ENCODE measurements at regions of chr1 and their contacts with region 1.

Region 1: DNA sequence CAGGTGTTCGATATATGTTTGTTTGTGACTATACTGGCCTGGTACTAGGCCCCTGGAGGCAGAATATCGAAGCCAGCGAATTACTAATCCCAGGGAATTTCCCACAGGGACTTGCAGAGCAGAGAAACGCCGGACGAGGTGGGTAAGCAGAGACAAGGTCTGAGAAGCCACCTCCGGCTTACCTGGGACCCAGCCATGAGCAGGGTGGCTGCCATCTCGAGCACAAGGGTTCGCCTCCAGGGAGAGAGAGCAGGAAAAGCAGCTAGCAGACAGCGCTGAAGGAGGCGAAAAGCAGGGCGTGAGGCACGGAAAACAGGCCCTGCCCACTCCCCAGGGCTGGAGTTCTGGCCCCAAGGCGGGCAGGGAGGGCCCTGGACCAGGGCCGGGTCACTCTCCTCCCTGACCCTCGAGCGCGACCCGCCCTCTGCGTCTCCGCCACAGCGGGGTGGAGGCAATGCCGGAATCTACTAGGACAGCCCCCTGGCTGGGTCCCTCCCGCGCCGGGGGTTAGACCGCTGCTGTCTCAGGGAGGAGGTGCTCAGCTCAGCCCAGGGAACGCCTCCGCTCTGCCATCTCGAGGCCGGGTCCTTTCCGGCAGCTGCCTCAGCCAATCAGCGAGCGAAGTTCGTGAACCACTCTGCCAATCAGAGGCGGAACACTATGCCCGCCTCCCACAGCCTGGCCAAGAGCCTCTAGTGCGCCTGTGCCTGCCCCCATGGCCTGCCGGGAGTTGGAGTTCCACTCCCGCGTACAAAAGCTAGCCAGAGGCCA is 1.7 kb downstream of the ZNF436 start:
- DNase-seq: peak; percentile 99
- H3K4me3 Mint-ChIP-seq: peak overlapping the region; percentile 93
- H3K27ac Mint-ChIP-seq: peak overlapping the region; percentile 98
- H3K4me1 Mint-ChIP-seq: peaks cover 30% of the 10 kb centered on the region
- H3K27me3 Mint-ChIP-seq: no peaks in the 10 kb centered on the region

Region 2: GRCh38 chr1:23103001-23103889 is 264.7 kb before region 1 on chr1:
- CTCF ChIA-PET with region 1: no interaction called
- POLR2A ChIA-PET with region 1: no interaction called
- intact Hi-C with region 1: no loop called
- DNase-seq: peak; percentile 36
- H3K4me3 Mint-ChIP-seq: peak overlapping the region; percentile 66
- H3K27ac Mint-ChIP-seq: peak overlapping the region; percentile 85
- H3K4me1 Mint-ChIP-seq: peaks cover 62% of the 10 kb centered on the region
- H3K27me3 Mint-ChIP-seq: no peaks in the 10 kb centered on the region

Region 3: DNA sequence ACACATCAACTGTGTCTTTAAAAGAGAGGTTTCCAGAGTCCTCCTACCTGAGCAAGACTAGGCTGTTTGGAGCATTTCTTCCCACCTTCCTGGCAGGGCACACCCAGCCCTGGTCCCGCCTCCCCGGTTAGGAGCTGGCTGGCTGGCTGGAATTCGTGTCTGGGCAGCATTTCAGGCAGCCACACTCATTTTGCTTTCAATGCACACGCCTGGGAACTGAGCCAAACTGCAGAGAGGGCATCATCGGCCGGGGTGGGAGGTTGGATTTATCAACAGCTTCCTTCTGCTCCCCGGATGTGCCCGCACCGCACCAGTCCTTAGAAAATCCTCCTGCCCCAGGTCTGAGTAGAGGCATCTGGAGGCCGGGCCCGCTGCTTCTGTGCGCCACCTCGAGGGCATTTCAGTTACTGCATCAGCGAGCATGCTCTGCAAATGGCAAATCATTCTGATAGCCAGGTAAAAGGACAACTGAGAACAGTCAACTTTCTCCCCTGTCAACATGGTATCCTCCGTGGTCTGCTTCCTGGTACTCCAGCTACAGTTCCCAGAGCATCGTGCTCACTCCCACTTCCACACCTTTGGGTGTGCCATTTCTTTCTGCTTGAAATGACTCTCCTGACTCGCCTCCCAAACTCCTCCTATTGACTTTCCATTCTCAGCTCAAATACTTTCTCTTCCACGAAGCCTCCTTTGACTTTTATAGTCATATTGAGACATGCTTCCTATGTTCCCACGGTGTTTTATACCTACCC is 35.9 kb after region 1 on chr1:
- CTCF ChIA-PET with region 1: interaction called, 13 read pairs
- POLR2A ChIA-PET with region 1: no interaction called
- intact Hi-C with region 1: loop called (anchors 1 kb)
- DNase-seq: peak; percentile 93
- H3K4me3 Mint-ChIP-seq: no peak overlapping the region
- H3K27ac Mint-ChIP-seq: no peak overlapping the region
- H3K4me1 Mint-ChIP-seq: peaks cover 9% of the 10 kb centered on the region
- H3K27me3 Mint-ChIP-seq: no peaks in the 10 kb centered on the region

Measured in activated CD4-positive, alpha-beta memory T cell treated with anti-CD3 and anti-CD28 coated beads for 36 hours (primary cell).